RWPE1 (cell line): ENCODE measurements at regions of chr1 and their contacts with region 1.

Region 1: DNA sequence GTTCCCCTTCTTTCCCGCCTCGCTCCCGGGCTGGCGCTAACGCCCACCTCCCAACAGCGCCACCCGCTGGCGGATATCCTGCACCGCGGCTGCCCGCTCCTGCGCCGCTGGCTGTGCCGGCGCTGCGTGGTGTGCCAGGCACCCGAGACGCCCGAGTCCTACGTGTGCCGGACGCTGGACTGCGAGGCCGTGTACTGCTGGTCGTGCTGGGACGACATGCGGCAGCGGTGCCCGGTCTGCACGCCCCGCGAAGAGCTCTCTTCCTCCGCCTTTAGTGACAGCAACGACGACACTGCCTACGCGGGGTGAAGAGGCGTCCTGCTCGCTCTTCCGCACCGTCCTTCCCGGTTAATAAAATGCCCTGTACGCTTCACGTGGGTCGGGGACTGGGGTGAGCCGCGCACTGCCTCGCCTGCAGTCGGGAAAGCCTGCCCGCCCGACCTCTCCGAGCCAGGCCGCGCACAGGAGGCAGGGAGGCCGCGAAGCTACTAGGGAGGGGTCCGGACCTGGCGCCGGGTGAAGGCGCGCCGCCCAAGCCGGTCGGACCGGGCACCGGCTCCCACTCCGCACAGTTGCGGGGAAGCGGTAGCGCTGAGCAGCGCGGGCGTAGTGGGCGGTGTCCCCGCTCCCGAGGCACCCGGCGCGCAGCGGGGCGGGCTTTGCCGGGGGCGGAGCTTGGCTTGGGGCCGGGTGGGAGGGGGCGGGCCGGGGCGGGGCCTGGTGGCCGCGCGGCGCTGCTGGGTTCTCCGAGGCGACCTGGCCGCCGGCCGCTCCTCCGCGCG is at the start of gene ADAM15:
- DNase-seq: peak; percentile 93
- H3K27ac ChIP-seq: peak within 1 kb of the TSS; percentile 98
- CTCF ChIP-seq: peak; percentile 94

Region 2: DNA sequence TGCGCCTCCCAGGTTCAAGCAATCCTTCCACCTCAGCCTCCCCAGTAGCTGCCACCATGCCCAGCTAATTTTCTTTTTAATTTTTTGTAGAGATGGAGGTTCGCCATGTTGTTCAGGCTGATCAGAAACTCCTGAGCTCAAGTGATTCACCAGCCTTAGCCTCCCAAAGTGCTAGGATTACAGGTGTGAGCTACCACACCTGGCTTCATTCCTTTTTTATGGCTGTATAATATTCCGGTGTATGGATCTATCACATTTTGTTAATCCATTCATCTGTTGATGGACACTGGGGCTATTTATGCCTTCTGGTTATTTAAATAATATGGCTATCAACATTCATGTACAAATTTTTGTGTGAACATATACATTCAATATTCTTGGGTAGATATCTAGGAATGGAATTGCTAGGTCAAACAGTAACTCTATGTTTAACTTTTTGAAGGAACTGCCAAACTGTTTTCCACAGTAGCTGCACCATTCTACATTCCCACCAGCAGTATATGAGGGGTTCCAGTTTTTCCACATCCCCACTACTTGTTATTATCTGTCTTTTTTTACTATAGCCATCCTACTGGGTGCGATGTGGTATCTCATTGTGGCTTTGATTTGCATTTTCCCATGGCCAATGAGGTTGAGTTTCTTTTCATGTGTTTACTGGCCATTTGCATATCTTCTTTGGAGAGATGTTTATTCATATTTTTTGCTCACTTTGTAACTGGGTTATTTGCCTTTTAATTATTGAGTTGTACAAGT is 1264.5 kb before region 1 on chr1:
- CTCF ChIA-PET with region 1: no interaction called
- POLR2A ChIA-PET with region 1: interaction called, 10 read pairs
- DNase-seq: no peak
- H3K27ac ChIP-seq: no peak overlapping the region
- CTCF ChIP-seq: no peak

Region 3: GRCh38 chr1:154992721-154993571 is 57.8 kb before region 1 on chr1:
- CTCF ChIA-PET with region 1: no interaction called
- POLR2A ChIA-PET with region 1: no interaction called
- DNase-seq: no peak
- H3K27ac ChIP-seq: peak overlapping the region; percentile 71
- CTCF ChIP-seq: no peak

Region 4: DNA sequence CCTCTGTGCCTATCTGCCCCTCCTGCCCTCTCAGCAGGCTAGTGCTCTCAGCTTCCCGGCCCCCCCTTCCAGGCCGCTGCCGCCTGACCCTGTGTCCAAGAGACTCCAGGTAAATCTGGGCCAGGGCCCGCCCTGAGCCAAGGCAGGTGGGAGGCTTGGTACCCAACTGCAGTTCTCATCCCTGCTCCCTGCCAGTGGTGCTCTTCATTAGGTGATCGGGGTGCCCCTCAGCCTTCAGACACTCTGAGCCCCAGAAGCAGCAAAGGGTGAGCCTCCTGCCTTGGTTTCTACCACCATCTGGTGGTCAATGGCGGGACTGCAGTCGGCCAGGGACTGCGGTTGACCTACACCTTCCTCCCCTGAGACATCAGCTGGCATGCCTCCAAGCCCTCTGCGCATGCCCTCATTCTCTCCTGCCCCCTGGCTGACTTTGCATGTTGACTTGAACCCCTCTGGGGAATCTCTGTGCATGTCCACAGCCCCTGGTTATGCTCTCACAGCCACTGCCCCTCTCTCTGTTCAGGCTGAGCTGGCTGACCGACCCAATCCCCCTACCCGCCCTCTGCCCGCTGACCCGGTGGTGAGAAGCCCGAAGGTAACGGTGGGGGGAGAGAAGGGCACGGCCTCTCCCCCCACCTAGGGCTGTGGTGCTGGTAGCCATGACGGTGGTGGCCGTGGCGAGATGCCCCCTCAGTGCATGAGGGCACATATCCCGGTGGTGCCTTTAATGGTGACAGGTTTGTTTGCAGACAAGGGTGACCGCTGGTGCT is 10.8 kb after region 1 on chr1:
- CTCF ChIA-PET with region 1: interaction called, 27 read pairs
- POLR2A ChIA-PET with region 1: interaction called, 5 read pairs
- DNase-seq: peak; percentile 83
- H3K27ac ChIP-seq: peak overlapping the region; percentile 92
- CTCF ChIP-seq: peak; percentile 98

Region 5: GRCh38 chr1:155105604-155106022 is 54.9 kb after region 1 on chr1:
- CTCF ChIA-PET with region 1: no interaction called
- POLR2A ChIA-PET with region 1: no interaction called
- DNase-seq: no peak
- H3K27ac ChIP-seq: no peak overlapping the region
- CTCF ChIP-seq: no peak